Ascending aorta (tissue), 2 donors: ENCODE measurements at regions of chr9 and their contacts with region 1.

Region 1: DNA sequence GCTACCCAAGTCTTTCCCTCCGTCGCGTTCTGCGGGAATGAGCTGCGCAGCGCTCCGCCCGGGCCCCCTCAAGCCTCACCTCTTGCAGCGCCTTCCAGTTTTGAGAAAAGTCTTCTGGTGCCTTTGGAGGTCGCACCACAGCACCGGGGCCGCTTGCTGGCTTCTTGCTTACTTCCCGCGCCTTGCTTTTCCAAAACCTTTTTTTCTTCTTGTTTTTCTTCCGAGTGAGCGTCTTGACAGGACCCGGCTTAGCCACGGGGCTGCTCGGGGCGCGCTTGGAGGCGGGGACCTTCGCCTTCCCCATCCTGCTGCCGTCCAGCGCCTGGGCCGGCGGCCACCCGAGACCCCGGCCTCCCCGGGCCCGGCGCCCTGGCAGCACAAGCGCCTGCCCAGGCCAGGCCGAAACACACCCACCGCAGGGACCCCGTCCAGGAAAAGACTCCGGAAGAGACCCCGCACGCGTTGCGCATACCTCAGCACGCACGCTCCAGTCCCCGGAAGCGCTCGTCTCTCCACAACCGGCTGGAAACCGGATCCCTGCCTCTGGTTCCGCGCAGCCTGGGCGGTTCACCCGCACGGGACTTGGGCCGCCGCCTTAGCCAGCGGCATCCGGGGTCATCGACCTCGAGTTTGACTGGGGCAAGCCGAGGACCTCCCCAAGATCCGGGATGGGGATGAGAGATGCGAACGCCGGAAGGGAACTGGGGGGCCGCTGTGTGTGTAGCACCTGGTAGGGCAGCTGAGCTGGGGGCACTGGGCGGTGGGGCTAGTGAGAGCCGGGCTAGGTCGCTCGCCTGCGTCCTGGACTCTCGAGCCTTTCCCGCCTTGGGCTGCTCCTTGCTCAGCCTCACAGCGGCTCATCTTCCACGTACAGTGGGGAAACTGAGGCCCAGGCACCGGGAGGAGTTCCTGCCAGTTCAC is at the start of gene REXO4:
- DNase-seq: peak; percentile 21 to 91
- H3K4me3 ChIP-seq: peak within 1 kb of the TSS; percentile 79 to 91
- H3K27ac ChIP-seq: peak within 1 kb of the TSS; percentile 78
- H3K4me1 ChIP-seq: peaks cover 0 to 21% of the 10 kb centered on the region in 2 donors
- H3K27me3 ChIP-seq: no peaks in the 10 kb centered on the region
- CTCF ChIP-seq: no peak
- total RNA-seq, gene REXO4: 29.4 TPM

Region 2: DNA sequence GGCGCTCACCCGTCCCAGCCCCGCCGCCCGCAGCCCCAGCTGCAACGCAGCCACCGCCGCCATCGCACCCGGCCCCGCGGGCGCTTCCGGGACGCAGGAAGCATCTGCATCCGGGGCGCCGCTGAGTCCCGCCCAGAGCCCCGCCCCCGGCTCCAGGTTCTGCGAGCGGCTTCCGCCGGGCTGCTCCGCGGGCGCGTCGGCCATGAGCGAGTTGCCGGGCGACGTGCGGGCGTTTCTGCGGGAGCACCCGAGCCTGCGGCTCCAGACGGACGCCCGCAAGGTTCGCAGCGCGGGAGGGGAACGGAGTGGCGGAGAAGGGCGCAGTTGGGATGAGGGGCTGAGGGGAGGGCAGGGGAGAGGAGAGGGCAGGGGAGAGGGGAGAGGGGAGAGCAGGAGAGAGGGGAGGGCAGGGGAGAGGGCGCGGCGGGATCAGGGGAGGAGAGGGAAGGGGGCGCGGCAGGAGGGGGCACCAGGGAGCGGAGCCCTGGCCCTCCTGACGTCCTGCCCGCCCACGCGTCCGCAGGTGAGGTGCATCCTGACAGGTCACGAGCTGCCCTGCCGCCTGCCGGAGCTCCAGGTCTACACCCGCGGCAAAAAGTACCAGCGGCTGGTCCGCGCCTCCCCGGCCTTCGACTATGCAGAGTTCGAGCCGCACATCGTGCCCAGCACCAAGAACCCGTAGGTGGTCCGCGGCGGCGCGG is 61.3 kb before region 1 on chr9 and contains the starts of genes SURF1 and SURF2:
- intact Hi-C with region 1: loop called (anchors 5 kb)
- DNase-seq: peak; percentile 52 to 92
- H3K4me3 ChIP-seq: peak within 1 kb of the TSS; percentile 70 to 87
- H3K27ac ChIP-seq: peak within 1 kb of the TSS; percentile 47 to 72
- H3K4me1 ChIP-seq: peaks cover 10 to 16% of the 10 kb centered on the region in 2 donors
- H3K27me3 ChIP-seq: no peaks in the 10 kb centered on the region
- CTCF ChIP-seq: no peak
- total RNA-seq, gene SURF1: 19.9 TPM
- total RNA-seq, gene SURF2: 4.4 TPM

Region 3: GRCh38 chr9:133478851-133479711 is 61.3 kb after region 1 on chr9 and contains the start of gene SLC2A6:
- intact Hi-C with region 1: loop called (anchors 2 kb)
- DNase-seq: peak; percentile 52 to 93
- H3K4me3 ChIP-seq: peak within 1 kb of the TSS; percentile 44 to 80
- H3K27ac ChIP-seq: peak within 1 kb of the TSS; percentile 50 to 64
- H3K4me1 ChIP-seq: peaks cover 6 to 17% of the 10 kb centered on the region in 2 donors
- H3K27me3 ChIP-seq: no peaks in the 10 kb centered on the region
- CTCF ChIP-seq: no peak
- total RNA-seq, gene SLC2A6: 8.7 TPM

Region 4: DNA sequence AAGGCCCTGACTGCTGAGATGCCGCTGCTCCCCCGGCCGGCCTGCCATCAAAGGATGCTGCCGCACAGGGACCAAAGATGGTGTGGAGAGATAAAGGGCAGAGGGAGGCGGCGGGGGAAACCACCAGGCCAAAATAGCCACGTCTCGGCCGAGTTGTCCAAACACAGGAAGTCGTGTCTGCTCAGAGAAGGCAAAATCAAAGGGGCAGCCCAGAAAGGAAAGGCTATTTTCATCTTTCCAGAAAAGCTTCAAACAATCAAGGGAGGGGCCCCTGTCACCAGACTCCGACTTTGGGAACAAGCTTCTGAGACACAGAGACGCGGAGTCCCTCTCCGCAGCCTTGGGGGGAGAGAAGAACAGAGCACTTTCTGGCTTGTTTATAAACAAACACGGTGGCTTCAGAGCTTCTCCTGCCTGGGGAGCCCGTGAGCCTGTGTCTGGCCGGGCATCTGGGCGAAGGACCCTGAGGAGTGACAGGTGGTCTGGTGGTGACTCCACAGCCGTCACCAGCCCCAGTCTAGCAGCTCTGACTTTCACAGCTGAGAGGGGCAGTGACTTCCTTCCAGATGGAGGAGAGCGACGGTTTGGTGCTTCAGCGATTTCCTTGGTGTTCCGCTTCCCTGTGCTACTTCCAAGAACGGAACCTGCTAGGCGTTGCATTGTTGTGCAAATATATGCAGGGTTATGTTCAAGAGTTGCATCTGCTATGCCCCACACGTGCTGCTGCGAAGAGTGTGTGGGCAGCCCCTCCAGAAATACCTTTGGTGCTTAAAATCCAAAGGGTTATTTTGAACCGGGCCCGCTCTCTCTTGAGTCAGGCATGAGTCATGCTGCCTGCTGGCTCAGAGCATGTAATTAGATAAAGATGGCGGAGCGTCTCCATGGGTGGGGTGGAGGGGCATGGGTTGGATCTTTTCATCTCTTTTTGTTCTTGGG is 140.7 kb after region 1 on chr9:
- intact Hi-C with region 1: no loop called
- DNase-seq: peak in 1 of 2 donors; percentile 75
- H3K4me3 ChIP-seq: peak overlapping the region in 1 of 2 donors; percentile 4
- H3K27ac ChIP-seq: peak overlapping the region in 1 of 2 donors; percentile 44
- H3K4me1 ChIP-seq: peaks cover 7 to 28% of the 10 kb centered on the region in 2 donors
- H3K27me3 ChIP-seq: no peaks in the 10 kb centered on the region
- CTCF ChIP-seq: no peak